ENCODE measurements at regions of chr6 and their contacts with region 1.

Region 1: DNA sequence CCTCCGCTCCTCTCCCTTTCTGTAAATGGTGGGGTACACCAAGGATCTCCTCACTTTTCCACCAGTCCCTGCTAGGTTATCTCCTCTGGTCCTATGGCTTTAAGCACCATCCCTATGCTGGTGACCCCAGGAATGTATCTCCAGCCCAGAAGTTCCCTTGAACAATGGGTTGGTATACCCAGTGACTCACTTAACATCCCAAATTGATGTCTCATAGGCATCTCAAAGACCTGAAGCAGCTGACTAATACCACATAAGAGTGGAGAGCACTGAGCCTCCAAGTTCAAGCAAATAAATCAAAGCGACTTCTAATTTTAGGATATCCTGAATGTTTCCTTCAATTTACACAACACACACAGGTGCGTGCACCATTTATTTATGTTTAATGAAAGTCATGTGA is 48.3 kb downstream of the ADGRF1 start:
- DNase-seq: peak; percentile 28
- ATAC-seq: no peak
- H3K4me3 ChIP-seq: no peak overlapping the region
- H3K27ac ChIP-seq: no peak overlapping the region
- H3K4me1 ChIP-seq: peaks cover 8% of the 10 kb centered on the region; the same call in 1 of the 2 replicates
- H3K27me3 ChIP-seq: peaks cover 0 to 26% of the 10 kb centered on the region in 2 experiments; a peak in 2 of 5 replicates
- CTCF ChIP-seq: no peak
- EP300 ChIP-seq: no peak
- POLR2A ChIP-seq: no peak
- RAD21 ChIP-seq: no peak

Region 2: DNA sequence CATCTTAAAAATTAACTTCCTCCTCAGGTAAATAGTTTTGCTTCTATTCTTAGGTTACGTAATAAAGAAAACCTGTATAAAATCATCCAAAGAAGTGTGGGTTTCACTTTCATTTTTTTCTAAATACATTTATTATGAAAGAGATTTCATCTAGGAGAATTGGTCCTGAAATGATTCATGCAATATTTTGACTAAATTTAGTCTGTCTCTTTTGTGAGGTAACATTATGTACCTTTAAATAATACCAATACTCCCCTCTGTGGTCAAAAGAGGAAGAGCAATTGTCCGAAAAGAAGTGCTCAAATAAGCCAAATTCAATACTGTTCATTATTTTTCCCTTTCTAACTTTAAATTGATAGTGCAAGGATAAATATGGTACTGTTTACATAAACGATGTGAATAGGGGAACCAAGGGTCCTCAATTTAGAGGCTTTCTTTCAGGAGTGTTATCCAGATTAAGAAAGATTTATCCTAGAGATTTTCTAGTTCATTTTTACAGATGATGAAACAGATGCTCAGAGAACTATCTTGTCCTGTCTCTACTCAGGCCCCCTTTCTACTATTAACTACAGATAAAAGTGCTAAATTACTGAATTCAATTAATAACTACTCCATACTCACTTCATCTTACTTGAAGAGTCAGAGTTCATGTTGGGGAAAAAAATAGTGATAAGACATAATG is 367.5 kb before region 1 on chr6:
- CTCF ChIA-PET with region 1: no interaction called
- POLR2A ChIA-PET with region 1: no interaction called
- in situ Hi-C with region 1: no loop called
- intact Hi-C with region 1: loop called (anchors 1 kb)
- DNase-seq: peak; percentile 33
- ATAC-seq: peak; percentile 58
- H3K4me3 ChIP-seq: no peak overlapping the region
- H3K27ac ChIP-seq: no peak overlapping the region
- H3K4me1 ChIP-seq: no peaks in the 10 kb centered on the region
- H3K27me3 ChIP-seq: no peaks in the 10 kb centered on the region
- CTCF ChIP-seq: peak; percentile 63
- EP300 ChIP-seq: no peak
- POLR2A ChIP-seq: no peak
- RAD21 ChIP-seq: no peak

Region 3: GRCh38 chr6:46815130-46815529 is 178.7 kb before region 1 on chr6:
- CTCF ChIA-PET with region 1: no interaction called
- POLR2A ChIA-PET with region 1: no interaction called
- in situ Hi-C with region 1: no loop called
- intact Hi-C with region 1: no loop called
- DNase-seq: no peak
- ATAC-seq: no peak
- H3K4me3 ChIP-seq: no peak overlapping the region
- H3K27ac ChIP-seq: no peak overlapping the region
- H3K4me1 ChIP-seq: no peaks in the 10 kb centered on the region
- H3K27me3 ChIP-seq: no peaks in the 10 kb centered on the region
- CTCF ChIP-seq: no peak
- EP300 ChIP-seq: no peak
- POLR2A ChIP-seq: no peak
- RAD21 ChIP-seq: no peak

Region 4: GRCh38 chr6:46848684-46849360 is 145.0 kb before region 1 on chr6:
- CTCF ChIA-PET with region 1: interaction called, 9 read pairs
- POLR2A ChIA-PET with region 1: no interaction called
- in situ Hi-C with region 1: loop called (anchors 25 kb)
- intact Hi-C with region 1: loop called (anchors 1 kb)
- DNase-seq: peak; percentile 71
- ATAC-seq: peak; percentile 100
- H3K4me3 ChIP-seq: peak overlapping the region; percentile 3 to 19 (median 6); a peak in 2 of 6 replicates
- H3K27ac ChIP-seq: no peak overlapping the region
- H3K4me1 ChIP-seq: peaks cover 9% of the 10 kb centered on the region
- H3K27me3 ChIP-seq: peaks cover 0 to 10% of the 10 kb centered on the region in 2 experiments; a peak in 1 of 5 replicates
- CTCF ChIP-seq: peak; percentile 100
- EP300 ChIP-seq: no peak
- POLR2A ChIP-seq: no peak
- RAD21 ChIP-seq: peak; percentile 97

Region 5: DNA sequence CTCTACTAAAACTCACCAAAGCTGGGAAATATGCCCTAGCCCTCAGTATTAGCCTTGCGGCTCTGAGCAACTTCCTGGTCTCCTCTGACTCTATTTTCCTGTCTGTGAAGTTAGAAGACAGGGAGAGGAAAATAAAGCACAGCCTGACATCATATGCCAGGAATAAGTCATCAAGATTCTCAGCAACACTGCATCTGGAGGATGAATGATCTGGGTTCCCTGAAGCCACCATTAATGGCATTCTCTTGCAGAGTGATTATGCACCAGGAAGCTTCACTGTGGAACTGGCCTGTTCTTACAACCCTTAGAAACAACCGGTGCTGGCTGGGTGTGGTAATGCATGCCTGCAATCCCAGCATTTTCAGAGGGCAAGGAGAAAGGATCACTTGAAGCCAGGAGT is 84.5 kb before region 1 on chr6:
- CTCF ChIA-PET with region 1: no interaction called
- POLR2A ChIA-PET with region 1: no interaction called
- in situ Hi-C with region 1: no loop called
- intact Hi-C with region 1: no loop called
- DNase-seq: no peak
- ATAC-seq: no peak
- H3K4me3 ChIP-seq: no peak overlapping the region
- H3K27ac ChIP-seq: no peak overlapping the region
- H3K4me1 ChIP-seq: no peaks in the 10 kb centered on the region
- H3K27me3 ChIP-seq: no peaks in the 10 kb centered on the region; a peak in 2 of 5 replicates
- CTCF ChIP-seq: no peak
- EP300 ChIP-seq: no peak
- POLR2A ChIP-seq: no peak
- RAD21 ChIP-seq: no peak

Region 6: DNA sequence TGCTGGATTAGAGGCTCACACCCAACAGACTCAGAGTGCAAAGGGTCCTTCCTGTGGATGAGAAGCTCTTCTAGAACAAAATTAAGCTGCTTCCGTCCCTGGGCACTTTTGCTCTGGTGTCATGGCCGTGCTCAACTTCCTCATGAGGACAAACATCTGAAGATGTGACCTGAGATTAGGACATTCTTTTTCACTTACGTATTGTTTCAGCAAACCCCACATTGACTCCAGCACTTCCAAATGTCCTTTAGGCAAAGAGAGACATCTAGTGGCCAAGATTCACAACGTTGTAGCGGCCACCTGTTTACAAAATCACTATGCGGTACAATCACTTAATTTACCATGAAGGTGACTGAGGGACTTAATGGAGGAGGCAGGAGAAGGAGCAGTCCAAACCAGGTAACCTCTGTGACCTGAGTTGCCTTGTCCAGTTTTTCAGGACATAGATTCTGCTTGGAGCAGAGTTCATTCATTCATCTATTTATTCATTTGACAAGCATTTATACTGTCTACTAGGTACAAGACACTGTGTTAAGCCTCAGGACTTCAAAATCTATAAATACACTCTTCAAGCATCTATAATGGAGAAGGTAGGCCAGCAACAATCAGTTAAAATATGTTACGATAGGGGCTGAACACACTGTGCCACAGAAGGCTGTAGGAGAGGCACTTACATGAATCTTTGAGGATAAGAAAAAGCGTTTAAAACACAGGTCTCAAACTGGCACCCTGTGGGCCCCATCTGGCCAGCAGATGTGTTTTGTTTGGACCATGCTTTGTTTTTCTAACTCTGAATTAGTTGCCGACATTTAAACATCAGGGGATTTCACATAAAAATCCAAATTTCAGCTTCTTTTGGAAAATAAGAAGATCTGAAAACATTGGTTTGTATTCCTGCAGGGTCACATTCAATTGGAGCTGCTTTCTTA is 53.9 kb after region 1 on chr6:
- CTCF ChIA-PET with region 1: no interaction called
- POLR2A ChIA-PET with region 1: no interaction called
- in situ Hi-C with region 1: no loop called
- intact Hi-C with region 1: loop called (anchors 1 kb)
- DNase-seq: peak; percentile 95
- ATAC-seq: peak; percentile 97
- H3K4me3 ChIP-seq: peak overlapping the region in 1 of 3 experiments; percentile 26; a peak in 1 of 6 replicates
- H3K27ac ChIP-seq: no peak overlapping the region
- H3K4me1 ChIP-seq: peaks cover 28% of the 10 kb centered on the region
- H3K27me3 ChIP-seq: peaks cover 2 to 4% of the 10 kb centered on the region in 2 experiments; a peak in 2 of 5 replicates
- CTCF ChIP-seq: peak; percentile 96
- EP300 ChIP-seq: peak in 1 of 2 experiments; percentile 31; a peak in 1 of 4 replicates
- POLR2A ChIP-seq: no peak
- RAD21 ChIP-seq: peak; percentile 82

Measured in HepG2 (cell line).